ENCODE measurements at regions of chr6 and their contacts with region 1.

Region 1: DNA sequence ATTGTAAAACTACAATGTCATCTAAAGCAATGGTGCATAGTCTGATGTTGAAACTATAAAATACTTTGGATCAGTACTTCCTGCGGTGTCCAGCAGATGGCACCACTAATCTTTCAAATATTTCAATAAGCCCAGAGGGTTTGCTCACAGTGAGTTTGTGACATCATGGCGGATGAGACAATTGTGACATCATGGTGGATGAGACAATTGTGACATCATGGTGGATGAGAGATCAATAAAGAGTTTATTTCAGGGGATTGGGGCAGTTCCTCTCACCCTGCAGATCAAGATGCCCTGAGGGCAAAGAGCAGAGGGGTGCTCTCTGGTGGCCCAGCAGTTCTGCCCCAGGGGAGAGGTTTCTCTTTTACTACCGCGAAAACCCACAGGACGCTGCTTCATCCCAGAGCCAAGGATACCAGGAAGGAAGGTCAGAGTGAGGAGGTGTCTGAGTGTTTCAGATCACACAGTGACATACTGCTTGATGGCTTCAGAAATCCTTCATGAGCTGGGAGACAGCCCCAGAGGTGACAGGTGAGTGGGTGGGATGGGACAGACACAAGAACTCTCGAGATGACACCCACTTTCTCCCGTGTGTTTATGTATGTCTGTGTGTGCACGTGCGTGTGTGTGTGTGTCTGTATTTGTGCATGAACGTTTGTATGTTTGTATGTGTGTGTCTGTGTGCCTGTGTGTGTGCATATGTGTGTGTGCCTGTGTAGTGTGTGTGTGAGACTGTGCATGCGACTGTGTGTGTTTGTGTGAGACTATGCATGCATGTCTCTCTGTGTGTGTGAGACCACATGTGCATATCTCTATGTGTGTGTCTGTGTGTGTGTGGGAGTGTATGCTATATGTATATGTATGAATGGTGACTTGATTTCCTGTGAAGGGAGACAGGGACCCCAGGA is 7.3 kb upstream of the ULBP2 start:
- DNase-seq: peak; percentile 60
- H3K4me3 Mint-ChIP-seq: no peak overlapping the region
- H3K27ac Mint-ChIP-seq: no peak overlapping the region
- H3K4me1 Mint-ChIP-seq: peaks cover 21% of the 10 kb centered on the region
- H3K27me3 Mint-ChIP-seq: peaks cover 82% of the 10 kb centered on the region

Region 2: GRCh38 chr6:150016324-150017185 is 82.1 kb after region 1 on chr6:
- intact Hi-C with region 1: loop called (anchors 1 kb)
- DNase-seq: peak; percentile 33
- H3K4me3 Mint-ChIP-seq: no peak overlapping the region
- H3K27ac Mint-ChIP-seq: no peak overlapping the region
- H3K4me1 Mint-ChIP-seq: peaks cover 17% of the 10 kb centered on the region
- H3K27me3 Mint-ChIP-seq: peaks cover 75% of the 10 kb centered on the region

Measured in activated T-helper 2 cell treated with anti-CD3 and anti-CD28 coated beads, Interferon-gamma antibody, Interleukin-2, Interleukin-4, amounts not matched to agents 10 μg/mL and 5 μg/mL and 100 μg/mL, durations not matched to agents 14 hours and 24 hours and 36 hours (primary cell).